Activated naive CD8-positive, alpha-beta T cell treated with anti-CD3 and anti-CD28 coated beads, Interleukin-2, amount 10 ng/mL, durations not matched to agents 7 days and 5 days (primary cell): ENCODE measurements at regions of chr11 and their contacts with region 1.

Region 1: DNA sequence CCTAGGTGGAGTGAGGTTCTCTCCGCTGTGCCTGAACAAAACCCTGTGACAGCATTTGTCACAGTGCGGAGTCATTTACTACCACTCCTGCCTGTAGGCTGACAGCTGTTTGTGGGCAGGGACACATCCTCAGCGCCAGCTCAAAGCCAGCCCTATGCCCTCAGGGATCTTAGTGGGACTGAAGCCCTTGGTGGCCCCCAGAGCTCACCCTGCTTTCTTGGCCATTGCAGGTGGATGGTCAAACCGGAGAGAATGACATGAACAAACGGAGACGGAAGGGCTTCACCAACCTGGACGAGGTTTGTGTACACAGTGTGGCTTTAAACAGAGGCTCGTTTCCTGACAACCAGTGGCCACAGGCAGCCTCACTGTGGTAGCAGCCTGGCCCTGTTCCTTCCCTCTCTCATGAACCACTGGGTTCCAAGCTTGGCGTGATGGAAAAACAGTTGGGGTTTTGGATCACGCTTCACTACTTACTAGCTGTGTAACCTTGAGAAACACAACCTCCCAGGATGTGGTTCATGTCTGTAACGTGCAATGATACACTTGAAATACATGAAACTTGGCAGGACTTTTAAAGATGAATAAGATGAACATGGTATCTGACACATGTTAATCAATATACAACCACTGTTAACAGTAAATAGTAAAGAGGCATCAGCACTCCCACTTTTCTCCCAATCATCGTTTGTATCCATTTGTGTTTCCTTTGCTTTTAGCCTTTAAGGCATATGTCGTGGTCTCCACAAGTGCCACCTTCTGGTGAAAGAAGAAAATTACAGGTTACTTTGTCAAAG is 125.8 kb downstream of the MICAL2 start:
- DNase-seq: peak; percentile 66
- ATAC-seq: peak; percentile 86
- H3K4me3 Mint-ChIP-seq: peak overlapping the region; percentile 66
- H3K27ac Mint-ChIP-seq: peak overlapping the region; percentile 86
- H3K4me1 Mint-ChIP-seq: peaks cover 23% of the 10 kb centered on the region
- H3K27me3 Mint-ChIP-seq: no peaks in the 10 kb centered on the region

Region 2: GRCh38 chr11:12087075-12088004 is 148.8 kb before region 1 on chr11:
- POLR2A ChIA-PET with region 1: interaction called, 10 read pairs
- DNase-seq: peak; percentile 51
- ATAC-seq: peak; percentile 86
- H3K4me3 Mint-ChIP-seq: peak overlapping the region; percentile 55
- H3K27ac Mint-ChIP-seq: peak overlapping the region; percentile 92
- H3K4me1 Mint-ChIP-seq: peaks cover 60% of the 10 kb centered on the region
- H3K27me3 Mint-ChIP-seq: peaks cover 3% of the 10 kb centered on the region

Region 3: GRCh38 chr11:12134236-12134585 is 101.9 kb before region 1 on chr11:
- POLR2A ChIA-PET with region 1: no interaction called
- DNase-seq: no peak
- ATAC-seq: peak; percentile 71
- H3K4me3 Mint-ChIP-seq: peak overlapping the region; percentile 36
- H3K27ac Mint-ChIP-seq: peak overlapping the region; percentile 83
- H3K4me1 Mint-ChIP-seq: peaks cover 20% of the 10 kb centered on the region
- H3K27me3 Mint-ChIP-seq: no peaks in the 10 kb centered on the region